ENCODE measurements at regions of chr17 and their contacts with region 1.

Region 1: DNA sequence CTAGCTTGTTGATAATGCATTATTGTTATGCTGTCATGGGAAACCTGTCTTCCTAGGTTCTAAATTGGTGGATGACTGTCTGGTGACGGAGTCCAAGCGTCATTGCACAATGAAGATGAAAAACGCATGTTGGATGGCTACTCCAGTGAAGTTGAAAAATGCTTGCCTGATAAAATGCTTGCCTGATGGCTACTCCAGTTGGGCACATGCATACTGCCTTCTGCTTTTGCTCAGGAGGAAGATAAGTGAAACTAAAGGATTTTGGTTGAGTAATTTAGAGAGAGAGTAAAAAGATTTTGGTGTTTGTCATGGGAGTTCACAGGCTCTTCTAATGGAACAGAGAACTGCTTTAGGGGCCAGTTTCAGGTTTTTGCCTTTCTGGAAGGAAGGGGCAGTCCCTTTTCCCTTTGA is 118.6 kb downstream of the PRKCA start:
- DNase-seq: no peak
- ATAC-seq: no peak
- H3K4me3 ChIP-seq: no peak overlapping the region
- H3K27ac ChIP-seq: no peak overlapping the region
- H3K4me1 ChIP-seq: no peaks in the 10 kb centered on the region
- H3K27me3 ChIP-seq: no peaks in the 10 kb centered on the region
- CTCF ChIP-seq: no peak
- POLR2A ChIP-seq: no peak
- RAD21 ChIP-seq: no peak

Region 2: GRCh38 chr17:66364990-66365490 is 55.9 kb before region 1 on chr17:
- CTCF ChIA-PET with region 1: no interaction called
- POLR2A ChIA-PET with region 1: no interaction called
- RAD21 ChIA-PET with region 1: no interaction called
- intact Hi-C with region 1: loop called (anchors 1 kb)
- DNase-seq: no peak
- ATAC-seq: no peak
- H3K4me3 ChIP-seq: no peak overlapping the region
- H3K27ac ChIP-seq: no peak overlapping the region
- H3K4me1 ChIP-seq: no peaks in the 10 kb centered on the region
- H3K27me3 ChIP-seq: no peaks in the 10 kb centered on the region
- CTCF ChIP-seq: no peak
- POLR2A ChIP-seq: no peak
- RAD21 ChIP-seq: no peak

Region 3: GRCh38 chr17:66398617-66399016 is 22.3 kb before region 1 on chr17:
- CTCF ChIA-PET with region 1: no interaction called
- POLR2A ChIA-PET with region 1: no interaction called
- RAD21 ChIA-PET with region 1: no interaction called
- intact Hi-C with region 1: no loop called
- DNase-seq: no peak
- ATAC-seq: no peak
- H3K4me3 ChIP-seq: no peak overlapping the region
- H3K27ac ChIP-seq: no peak overlapping the region
- H3K4me1 ChIP-seq: no peaks in the 10 kb centered on the region
- H3K27me3 ChIP-seq: no peaks in the 10 kb centered on the region
- CTCF ChIP-seq: no peak
- POLR2A ChIP-seq: no peak
- RAD21 ChIP-seq: no peak

Measured in HCT116 (cell line).